MCF 10A (cell line): ENCODE measurements at regions of chr11 and their contacts with region 1.

Region 1: GRCh38 chr11:76734456-76735420 is 48.4 kb upstream of the TSKU start:
- DNase-seq: no peak
- H3K4me3 Mint-ChIP-seq: no peak overlapping the region
- H3K27ac Mint-ChIP-seq: no peak overlapping the region
- H3K4me1 Mint-ChIP-seq: no peaks in the 10 kb centered on the region
- H3K27me3 Mint-ChIP-seq: peaks cover 13% of the 10 kb centered on the region
- CTCF ChIP-seq: no peak

Region 2: GRCh38 chr11:76654298-76654851 is 80.4 kb before region 1 on chr11:
- CTCF ChIA-PET with region 1: no interaction called
- POLR2A ChIA-PET with region 1: no interaction called
- intact Hi-C with region 1: no loop called
- DNase-seq: no peak
- H3K4me3 Mint-ChIP-seq: no peak overlapping the region
- H3K27ac Mint-ChIP-seq: no peak overlapping the region
- H3K4me1 Mint-ChIP-seq: no peaks in the 10 kb centered on the region
- H3K27me3 Mint-ChIP-seq: peaks cover 5% of the 10 kb centered on the region
- CTCF ChIP-seq: no peak

Region 3: DNA sequence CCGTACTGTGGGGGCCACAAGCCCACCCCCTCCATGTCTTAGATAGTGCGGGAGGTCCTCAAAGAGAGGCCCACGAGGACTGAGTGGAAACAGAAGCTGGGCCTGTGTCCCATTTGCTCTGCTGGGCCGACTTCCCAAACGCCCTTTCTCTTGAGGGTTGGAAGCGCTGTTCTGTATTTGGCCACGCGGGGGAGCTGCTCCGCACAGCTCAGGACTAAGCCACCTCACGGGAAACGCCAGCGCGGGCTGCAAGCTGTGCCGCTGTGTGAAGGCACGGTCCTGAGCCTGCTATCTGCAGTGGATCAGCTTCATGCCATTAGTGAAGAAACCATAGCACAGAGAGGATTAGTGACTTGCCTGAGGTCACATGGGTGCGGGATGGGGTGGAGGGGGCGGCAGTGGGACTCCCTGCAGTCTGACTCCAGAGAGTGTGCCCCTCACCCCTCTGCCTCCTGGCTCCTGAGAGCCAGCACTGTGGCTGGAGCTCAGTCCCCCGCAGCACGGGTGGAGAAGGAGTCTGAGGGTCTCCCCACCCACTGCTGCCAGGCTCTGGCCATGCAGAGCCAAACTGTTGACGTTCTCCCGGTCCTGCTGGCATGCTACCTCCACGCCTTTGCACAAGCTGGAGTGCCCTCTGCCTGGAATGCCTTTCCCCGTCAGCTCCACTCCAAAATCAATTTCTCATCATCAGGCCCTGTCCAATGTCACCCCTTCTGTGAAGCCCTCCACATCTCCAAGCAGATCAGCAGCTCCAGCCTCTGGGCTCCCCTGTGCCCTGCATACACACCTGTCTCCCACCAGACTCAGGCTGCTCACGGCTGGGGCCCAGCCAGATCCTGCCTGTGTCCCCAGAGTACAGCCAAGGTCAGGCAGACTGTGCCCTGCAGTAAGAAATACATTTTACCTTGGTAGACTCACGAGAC is 12.7 kb before region 1 on chr11:
- CTCF ChIA-PET with region 1: interaction called, 19 read pairs
- POLR2A ChIA-PET with region 1: interaction called, 3 read pairs
- intact Hi-C with region 1: no loop called
- DNase-seq: peak; percentile 75
- H3K4me3 Mint-ChIP-seq: no peak overlapping the region
- H3K27ac Mint-ChIP-seq: no peak overlapping the region
- H3K4me1 Mint-ChIP-seq: no peaks in the 10 kb centered on the region
- H3K27me3 Mint-ChIP-seq: peaks cover 36% of the 10 kb centered on the region
- CTCF ChIP-seq: peak; percentile 81

Region 4: GRCh38 chr11:76782526-76783293 is 48.0 kb after region 1 on chr11:
- CTCF ChIA-PET with region 1: interaction called, 12 read pairs
- POLR2A ChIA-PET with region 1: interaction called, 4 read pairs
- intact Hi-C with region 1: loop called (anchors 5 kb)
- DNase-seq: peak; percentile 90
- H3K4me3 Mint-ChIP-seq: peak overlapping the region; percentile 83
- H3K27ac Mint-ChIP-seq: peak overlapping the region; percentile 17
- H3K4me1 Mint-ChIP-seq: peaks cover 56% of the 10 kb centered on the region
- H3K27me3 Mint-ChIP-seq: no peaks in the 10 kb centered on the region
- CTCF ChIP-seq: no peak

Region 5: GRCh38 chr11:76788661-76789439 is 54.1 kb after region 1 on chr11:
- CTCF ChIA-PET with region 1: interaction called, 47 read pairs
- POLR2A ChIA-PET with region 1: interaction called, 4 read pairs
- intact Hi-C with region 1: loop called (anchors 5 kb)
- DNase-seq: peak; percentile 94
- H3K4me3 Mint-ChIP-seq: peak overlapping the region; percentile 51
- H3K27ac Mint-ChIP-seq: peak overlapping the region; percentile 69
- H3K4me1 Mint-ChIP-seq: peaks cover 84% of the 10 kb centered on the region
- H3K27me3 Mint-ChIP-seq: no peaks in the 10 kb centered on the region
- CTCF ChIP-seq: no peak

Region 6: GRCh38 chr11:76799066-76799804 is 64.5 kb after region 1 on chr11:
- CTCF ChIA-PET with region 1: interaction called, 161 read pairs
- POLR2A ChIA-PET with region 1: interaction called, 16 read pairs
- intact Hi-C with region 1: loop called (anchors 1 kb)
- DNase-seq: peak; percentile 77
- H3K4me3 Mint-ChIP-seq: no peak overlapping the region
- H3K27ac Mint-ChIP-seq: no peak overlapping the region
- H3K4me1 Mint-ChIP-seq: peaks cover 30% of the 10 kb centered on the region
- H3K27me3 Mint-ChIP-seq: no peaks in the 10 kb centered on the region
- CTCF ChIP-seq: peak; percentile 85

Region 7: DNA sequence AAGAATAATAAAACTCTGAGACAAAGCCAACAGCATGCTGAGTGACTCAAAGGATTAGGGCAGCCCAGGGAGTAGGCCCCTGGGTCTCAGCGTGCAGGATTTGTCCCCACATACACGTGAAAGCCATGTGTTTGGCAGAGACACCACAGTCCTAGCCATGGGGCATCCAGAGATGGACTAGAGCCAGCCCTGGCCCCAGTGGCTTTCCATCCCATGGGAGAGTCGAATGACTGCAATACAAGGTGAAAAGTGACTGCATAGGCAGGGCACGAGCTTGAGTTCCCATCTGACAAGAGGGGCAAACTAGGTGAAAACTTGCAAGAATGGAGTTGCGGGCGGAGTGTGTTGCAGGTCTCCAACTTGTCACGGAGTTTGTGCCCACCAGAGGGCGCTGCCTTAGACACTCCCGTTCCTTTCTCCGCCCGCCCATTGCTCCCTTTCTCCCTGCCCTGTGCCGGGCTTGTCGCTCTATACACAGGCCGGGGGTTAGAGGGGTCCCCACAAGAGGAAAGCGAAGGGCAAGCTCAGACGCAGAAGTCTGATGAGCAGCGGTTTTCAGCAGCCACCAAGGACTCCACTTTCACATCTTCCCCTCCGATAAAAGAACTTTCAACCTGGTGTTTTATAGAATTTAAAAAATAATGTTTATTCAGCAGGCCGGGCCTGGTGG is 72.6 kb after region 1 on chr11:
- CTCF ChIA-PET with region 1: interaction called, 161 read pairs
- POLR2A ChIA-PET with region 1: interaction called, 4 read pairs
- intact Hi-C with region 1: loop called (anchors 2 kb)
- DNase-seq: peak; percentile 87
- H3K4me3 Mint-ChIP-seq: no peak overlapping the region
- H3K27ac Mint-ChIP-seq: no peak overlapping the region
- H3K4me1 Mint-ChIP-seq: peaks cover 37% of the 10 kb centered on the region
- H3K27me3 Mint-ChIP-seq: no peaks in the 10 kb centered on the region
- CTCF ChIP-seq: peak; percentile 84

Region 8: GRCh38 chr11:77187776-77188632 is 453.3 kb after region 1 on chr11:
- CTCF ChIA-PET with region 1: no interaction called
- POLR2A ChIA-PET with region 1: no interaction called
- intact Hi-C with region 1: loop called (anchors 5 kb)
- DNase-seq: peak; percentile 83
- H3K4me3 Mint-ChIP-seq: no peak overlapping the region
- H3K27ac Mint-ChIP-seq: no peak overlapping the region
- H3K4me1 Mint-ChIP-seq: no peaks in the 10 kb centered on the region
- H3K27me3 Mint-ChIP-seq: peaks cover 12% of the 10 kb centered on the region
- CTCF ChIP-seq: peak; percentile 79